ENCODE measurements at regions of chr19 and their contacts with region 1.

Region 1: GRCh38 chr19:8526345-8527067 is 12.5 kb upstream of the ZNF414 start:
- DNase-seq: peak; percentile 54 to 97
- H3K4me3 ChIP-seq: peak overlapping the region; percentile 61 to 84 (median 70)
- H3K27ac ChIP-seq: peak overlapping the region; percentile 29; the same call in 1 of the 2 replicates
- H3K4me1 ChIP-seq: peaks cover 0 to 8% (median 3%) of the 10 kb centered on the region in 4 experiments; a peak in 4 of 7 replicates
- H3K27me3 ChIP-seq: no peaks in the 10 kb centered on the region
- CTCF ChIP-seq: no peak
- EP300 ChIP-seq: no peak
- POLR2A ChIP-seq: no peak
- RAD21 ChIP-seq: no peak

Region 2: GRCh38 chr19:8468761-8469373 is 57.6 kb before region 1 on chr19:
- CTCF ChIA-PET with region 1: no interaction called
- POLR2A ChIA-PET with region 1: no interaction called
- DNase-seq: no peak
- H3K4me3 ChIP-seq: no peak overlapping the region
- H3K27ac ChIP-seq: no peak overlapping the region
- H3K4me1 ChIP-seq: no peaks in the 10 kb centered on the region
- H3K27me3 ChIP-seq: no peaks in the 10 kb centered on the region
- CTCF ChIP-seq: no peak
- EP300 ChIP-seq: no peak
- POLR2A ChIP-seq: no peak
- RAD21 ChIP-seq: no peak

Region 3: GRCh38 chr19:8505680-8506401 is 20.7 kb before region 1 on chr19:
- CTCF ChIA-PET with region 1: interaction called, 14 read pairs
- POLR2A ChIA-PET with region 1: interaction called, 3 read pairs
- DNase-seq: peak; percentile 49 to 94
- H3K4me3 ChIP-seq: peak overlapping the region; percentile 32 to 70 (median 62)
- H3K27ac ChIP-seq: no peak overlapping the region
- H3K4me1 ChIP-seq: peaks cover 0 to 6% (median 5%) of the 10 kb centered on the region in 4 experiments; a peak in 5 of 7 replicates
- H3K27me3 ChIP-seq: no peaks in the 10 kb centered on the region
- CTCF ChIP-seq: peak; percentile 54 to 62 (median 56)
- EP300 ChIP-seq: no peak
- POLR2A ChIP-seq: peak in 1 of 2 experiments; percentile 70; a peak in 1 of 3 replicates
- RAD21 ChIP-seq: peak; percentile 29 to 58; a peak in 3 of 4 replicates

Region 4: GRCh38 chr19:8513687-8514504 is 12.6 kb before region 1 on chr19 and contains the start of gene ZNF414:
- CTCF ChIA-PET with region 1: interaction called, 15 read pairs
- POLR2A ChIA-PET with region 1: interaction called, 73 read pairs
- DNase-seq: peak; percentile 96 to 99
- H3K4me3 ChIP-seq: peak within 1 kb of the TSS; percentile 61 to 86 (median 76)
- H3K27ac ChIP-seq: peak within 1 kb of the TSS; percentile 89; the same call in 1 of the 2 replicates
- H3K4me1 ChIP-seq: peaks cover 0 to 14% (median 8%) of the 10 kb centered on the region in 4 experiments; a peak in 6 of 7 replicates
- H3K27me3 ChIP-seq: no peaks in the 10 kb centered on the region
- CTCF ChIP-seq: no peak
- EP300 ChIP-seq: no peak
- POLR2A ChIP-seq: peak; percentile 93 to 96
- RAD21 ChIP-seq: no peak
- total RNA-seq, gene ZNF414: 23.6 and 26.8 TPM in 2 replicates

Region 5: GRCh38 chr19:8552810-8553209 is 26.3 kb after region 1 on chr19:
- CTCF ChIA-PET with region 1: no interaction called
- POLR2A ChIA-PET with region 1: interaction called, 13 read pairs
- DNase-seq: peak; percentile 10 to 55
- H3K4me3 ChIP-seq: no peak overlapping the region
- H3K27ac ChIP-seq: no peak overlapping the region
- H3K4me1 ChIP-seq: no peaks in the 10 kb centered on the region; a peak in 2 of 7 replicates
- H3K27me3 ChIP-seq: no peaks in the 10 kb centered on the region
- CTCF ChIP-seq: no peak
- EP300 ChIP-seq: 0 out of 3 replicates have a peak, but pooled peaks of 1 of the 2 experiments have one; percentile 24
- POLR2A ChIP-seq: no peak
- RAD21 ChIP-seq: no peak

Region 6: GRCh38 chr19:8609279-8610040 is 83.0 kb after region 1 on chr19:
- CTCF ChIA-PET with region 1: no interaction called
- POLR2A ChIA-PET with region 1: no interaction called
- DNase-seq: peak; percentile 36 to 82
- H3K4me3 ChIP-seq: peak overlapping the region; percentile 70 to 93 (median 88)
- H3K27ac ChIP-seq: peak overlapping the region; percentile 79
- H3K4me1 ChIP-seq: peaks cover 10 to 29% (median 19%) of the 10 kb centered on the region in 4 experiments
- H3K27me3 ChIP-seq: no peaks in the 10 kb centered on the region
- CTCF ChIP-seq: peak in 1 of 3 experiments; percentile 11; a peak in 2 of 4 replicates
- EP300 ChIP-seq: peak in 1 of 2 experiments; percentile 52; a peak in 1 of 3 replicates
- POLR2A ChIP-seq: peak in 1 of 2 experiments; percentile 71; a peak in 1 of 3 replicates
- RAD21 ChIP-seq: peak in 1 of 2 experiments; percentile 0; a peak in 1 of 4 replicates

Region 7: GRCh38 chr19:8890260-8890659 is 363.8 kb after region 1 on chr19:
- CTCF ChIA-PET with region 1: no interaction called
- POLR2A ChIA-PET with region 1: no interaction called
- DNase-seq: no peak
- H3K4me3 ChIP-seq: no peak overlapping the region
- H3K27ac ChIP-seq: no peak overlapping the region
- H3K4me1 ChIP-seq: no peaks in the 10 kb centered on the region
- H3K27me3 ChIP-seq: no peaks in the 10 kb centered on the region
- CTCF ChIP-seq: no peak
- EP300 ChIP-seq: no peak
- POLR2A ChIP-seq: no peak
- RAD21 ChIP-seq: no peak